ENCODE measurements at regions of chr6 and their contacts with region 1.

Region 1: DNA sequence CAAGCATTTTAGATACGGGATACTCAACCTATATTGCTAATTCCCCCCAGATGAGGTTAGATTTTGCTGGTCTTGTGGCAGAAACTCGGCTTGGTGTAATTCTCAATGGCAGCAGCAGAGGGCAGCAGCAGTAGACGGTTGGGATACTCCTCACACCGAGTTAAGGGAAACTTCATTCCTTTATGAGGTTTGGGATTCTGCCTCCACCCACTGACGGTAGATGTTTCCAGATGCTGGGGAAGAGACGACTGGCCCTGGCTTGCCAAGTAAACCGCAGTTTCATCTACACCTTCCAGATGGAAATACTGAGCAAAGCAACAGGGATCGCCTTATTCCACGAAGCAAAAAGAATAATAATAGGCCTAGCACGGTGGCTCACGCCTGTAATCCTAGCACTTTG is 8.2 kb upstream of the TBC1D7 start:
- DNase-seq: peak; percentile 78 to 86
- ATAC-seq: peak; percentile 84 to 91 (median 88)
- H3K4me3 ChIP-seq: no peak overlapping the region
- H3K27ac ChIP-seq: no peak overlapping the region
- H3K4me1 ChIP-seq: no peaks in the 10 kb centered on the region
- H3K27me3 ChIP-seq: no peaks in the 10 kb centered on the region
- CTCF ChIP-seq: peak; percentile 83

Region 2: DNA sequence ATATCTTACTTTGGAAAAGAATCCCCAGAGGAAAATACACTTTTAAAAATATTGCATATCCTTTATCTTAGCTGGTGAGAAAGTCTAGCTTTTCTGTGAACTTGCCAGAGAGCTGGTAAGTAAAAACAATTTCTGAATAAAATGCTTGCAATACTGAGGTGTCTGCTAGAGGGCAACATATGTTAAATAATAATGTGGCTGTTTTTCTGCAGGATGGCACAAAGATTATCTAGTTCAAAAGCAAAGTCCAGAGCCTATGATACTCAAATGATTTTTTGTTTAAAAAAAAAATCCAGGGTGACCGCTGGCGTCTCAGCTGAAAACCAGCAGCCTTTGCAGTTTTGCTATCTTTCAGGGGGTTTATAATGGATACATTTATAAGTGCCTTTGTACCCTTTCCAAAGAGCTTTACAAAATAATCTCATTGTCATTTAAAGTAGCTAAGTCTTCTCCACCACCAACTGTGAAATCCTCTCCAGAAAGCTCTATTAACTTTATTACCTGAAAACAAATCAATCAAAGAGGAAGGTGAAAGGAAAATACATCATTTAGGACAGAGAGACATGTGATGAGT is 425.1 kb before region 1 on chr6:
- intact Hi-C with region 1: loop called in 1 of 2 experiments (anchors 10 kb)
- DNase-seq: no peak
- ATAC-seq: no peak
- H3K4me3 ChIP-seq: no peak overlapping the region
- H3K27ac ChIP-seq: no peak overlapping the region
- H3K4me1 ChIP-seq: no peaks in the 10 kb centered on the region
- H3K27me3 ChIP-seq: no peaks in the 10 kb centered on the region
- CTCF ChIP-seq: peak; percentile 41

Region 3: GRCh38 chr6:13194852-13195251 is 141.7 kb before region 1 on chr6:
- intact Hi-C with region 1: loop called in 1 of 2 experiments (anchors 10 kb)
- DNase-seq: peak in 1 of 2 donors; percentile 52
- ATAC-seq: no peak
- H3K4me3 ChIP-seq: no peak overlapping the region
- H3K27ac ChIP-seq: no peak overlapping the region
- H3K4me1 ChIP-seq: no peaks in the 10 kb centered on the region
- H3K27me3 ChIP-seq: peaks cover 0 to 7% (median 0%) of the 10 kb centered on the region in 3 donors
- CTCF ChIP-seq: peak; percentile 36

Region 4: DNA sequence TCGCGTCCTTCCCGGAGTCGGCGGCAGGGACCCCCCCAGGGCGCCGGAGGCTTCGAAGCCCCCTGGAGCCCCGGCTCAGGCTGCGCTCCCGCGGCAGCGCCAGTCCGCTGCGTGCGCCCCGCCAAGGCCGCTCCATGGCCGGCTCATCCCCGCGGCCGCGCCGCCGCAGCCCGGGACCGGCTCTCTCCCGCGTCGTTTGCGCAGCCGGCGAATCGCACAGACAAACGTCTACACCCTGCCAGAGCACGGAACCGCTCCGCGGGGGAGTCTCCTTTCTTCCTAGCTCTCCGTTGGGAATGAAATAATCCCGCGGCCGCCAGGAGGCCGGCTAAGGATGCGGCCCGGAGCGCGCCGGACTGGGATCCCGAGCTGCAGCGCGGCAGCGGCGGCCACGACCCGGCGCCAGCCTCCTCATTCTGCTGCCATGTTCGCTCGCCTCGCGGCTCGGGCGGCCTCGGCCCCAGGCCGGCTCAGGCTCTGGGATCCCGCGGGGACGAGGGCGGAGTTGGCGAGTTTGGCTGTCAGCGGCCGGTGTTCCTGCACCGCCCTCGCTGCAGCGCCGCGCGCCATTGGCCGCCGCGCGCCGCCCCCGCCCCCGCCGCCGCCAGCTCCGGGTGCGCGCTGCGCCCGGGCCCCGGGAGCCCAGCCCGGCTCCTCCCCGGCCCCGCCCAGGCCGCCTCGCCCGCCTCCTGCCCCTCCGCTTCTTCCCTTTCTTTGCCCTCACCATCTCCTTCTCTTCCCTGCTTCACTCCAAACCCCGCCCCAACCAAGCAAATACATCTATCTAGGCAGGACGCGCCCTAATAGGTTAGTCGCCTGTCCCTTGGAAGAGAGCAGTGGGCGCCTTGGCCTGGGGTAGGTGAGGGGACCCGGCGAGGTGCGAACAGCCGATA is 150.8 kb after region 1 on chr6 and contains the start of gene GFOD1:
- intact Hi-C with region 1: loop called in 1 of 2 experiments (anchors 5 kb)
- DNase-seq: peak; percentile 91 to 94
- ATAC-seq: peak; percentile 83 to 90 (median 87)
- H3K4me3 ChIP-seq: peak within 1 kb of the TSS; percentile 89
- H3K27ac ChIP-seq: peak within 1 kb of the TSS; percentile 97
- H3K4me1 ChIP-seq: peaks cover 33% of the 10 kb centered on the region
- H3K27me3 ChIP-seq: no peaks in the 10 kb centered on the region
- CTCF ChIP-seq: no peak
- total RNA-seq, gene GFOD1: 16.7 to 34.2 (median 23.9) TPM

Region 5: DNA sequence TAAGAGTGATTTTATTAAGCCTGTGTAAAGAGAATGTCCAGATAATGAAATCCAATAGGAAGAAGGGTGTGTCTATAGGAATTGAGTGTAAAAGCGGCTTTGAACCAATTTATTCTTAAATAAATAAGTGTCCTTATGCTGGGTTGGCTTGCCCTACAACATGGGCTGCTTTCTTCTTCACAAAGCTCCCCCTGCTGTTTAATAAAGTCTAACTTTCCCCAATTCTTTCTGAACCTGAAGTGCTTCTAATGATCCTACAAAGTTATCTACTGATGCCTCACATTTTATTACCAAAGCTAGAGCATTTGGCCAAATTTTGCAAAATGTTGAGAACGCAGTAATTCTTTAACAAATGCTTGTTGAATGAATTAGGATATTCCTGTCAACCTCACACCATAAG is 201.5 kb after region 1 on chr6:
- intact Hi-C with region 1: loop called (anchors 2 to 5 kb)
- DNase-seq: no peak
- ATAC-seq: peak; percentile 70 to 92 (median 78)
- H3K4me3 ChIP-seq: no peak overlapping the region
- H3K27ac ChIP-seq: no peak overlapping the region
- H3K4me1 ChIP-seq: no peaks in the 10 kb centered on the region
- H3K27me3 ChIP-seq: no peaks in the 10 kb centered on the region
- CTCF ChIP-seq: peak; percentile 62

Region 6: DNA sequence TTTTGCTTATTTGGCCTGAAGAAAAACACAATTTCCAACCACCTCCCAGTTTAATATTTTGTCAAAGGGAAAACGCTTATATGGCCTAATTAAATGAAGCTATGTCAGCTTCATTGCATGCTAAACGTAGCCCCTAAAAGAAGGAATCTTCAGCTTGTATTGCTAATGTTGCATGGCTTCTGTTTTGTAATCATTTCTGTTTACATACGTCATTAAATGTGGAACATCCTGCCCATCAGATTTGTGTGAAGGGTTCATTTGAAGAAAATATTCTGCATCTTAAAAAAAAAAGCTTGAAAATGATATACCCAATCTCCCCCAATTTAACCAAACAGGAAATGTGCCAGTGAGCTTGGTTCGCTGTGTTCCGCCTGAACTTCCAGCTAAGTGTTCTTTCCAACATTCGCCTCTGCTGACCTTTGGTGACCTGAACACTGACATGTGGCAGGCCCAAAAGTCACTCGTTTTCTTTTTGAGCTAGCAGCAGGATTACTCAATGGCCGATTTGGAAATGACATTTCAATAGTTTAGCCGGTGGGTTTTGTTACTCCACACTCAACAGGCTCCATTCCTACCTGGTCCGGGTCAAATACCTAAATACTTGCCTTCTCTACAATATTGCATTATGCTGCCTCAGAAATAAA is 225.2 kb after region 1 on chr6:
- intact Hi-C with region 1: loop called in 1 of 2 experiments (anchors 10 kb)
- DNase-seq: peak in 1 of 2 donors; percentile 46
- ATAC-seq: no peak
- H3K4me3 ChIP-seq: no peak overlapping the region
- H3K27ac ChIP-seq: no peak overlapping the region
- H3K4me1 ChIP-seq: no peaks in the 10 kb centered on the region
- H3K27me3 ChIP-seq: no peaks in the 10 kb centered on the region
- CTCF ChIP-seq: no peak

Measured in psoas muscle (tissue), 8 donors.